B cell (primary cell): ENCODE measurements at regions of chr14 and their contacts with region 1.

Region 1: DNA sequence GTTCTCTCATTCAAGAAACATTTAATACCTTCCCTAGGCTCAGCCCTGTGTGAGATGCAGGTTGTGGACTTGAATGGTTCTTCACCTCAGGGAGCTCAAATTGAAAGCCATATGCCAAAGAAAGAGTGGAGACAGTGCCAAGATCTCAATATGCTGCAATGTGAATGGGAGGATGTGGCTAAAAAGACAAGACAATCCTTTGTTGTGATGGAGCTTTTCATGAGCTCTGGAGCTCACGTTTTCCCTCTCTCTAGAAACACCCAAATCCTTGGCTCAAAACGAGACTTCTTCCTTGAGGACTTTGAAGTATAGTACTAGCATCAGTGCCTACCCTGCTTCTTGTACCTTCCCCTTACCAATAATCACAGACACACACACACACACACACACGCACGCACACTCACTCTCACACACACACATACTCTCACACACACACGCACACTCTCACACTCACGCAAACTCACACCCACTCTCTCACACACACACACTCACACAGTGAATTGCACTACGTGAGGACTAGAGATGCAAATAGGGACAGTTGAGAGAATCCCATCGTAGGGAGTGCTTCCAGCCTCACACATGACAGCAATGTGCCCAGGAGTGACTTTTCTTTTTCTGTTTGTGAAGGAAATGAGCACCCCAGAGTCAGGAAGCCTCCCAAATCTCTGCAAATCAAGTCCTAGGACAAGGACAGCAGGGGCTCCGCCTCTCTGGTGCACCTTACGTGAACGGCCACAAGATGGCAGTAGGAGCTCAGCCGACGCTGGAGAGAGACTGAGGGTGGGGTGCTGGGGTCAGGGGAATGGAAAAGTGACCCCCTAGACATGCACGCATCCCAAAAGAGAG is 231.4 kb downstream of the PCNX1 start:
- DNase-seq: peak; percentile 77
- ATAC-seq: peak; percentile 72
- H3K4me3 ChIP-seq: no peak overlapping the region
- H3K4me3 Mint-ChIP-seq: no peak overlapping the region
- H3K27ac ChIP-seq: no peak overlapping the region
- H3K27ac Mint-ChIP-seq: no peak overlapping the region
- H3K4me1 ChIP-seq: peaks cover 15 to 23% of the 10 kb centered on the region in 2 donors
- H3K4me1 Mint-ChIP-seq: peaks cover 27% of the 10 kb centered on the region
- H3K27me3 ChIP-seq: no peaks in the 10 kb centered on the region
- H3K27me3 Mint-ChIP-seq: no peaks in the 10 kb centered on the region
- CTCF ChIP-seq: peak; percentile 97

Region 2: GRCh38 chr14:71103662-71104484 is 34.8 kb before region 1 on chr14:
- CTCF ChIA-PET with region 1: interaction called, 15 read pairs
- POLR2A ChIA-PET with region 1: no interaction called
- intact Hi-C with region 1: loop called (anchors 2 kb)
- DNase-seq: peak; percentile 70
- ATAC-seq: peak; percentile 49
- H3K4me3 ChIP-seq: no peak overlapping the region
- H3K4me3 Mint-ChIP-seq: no peak overlapping the region
- H3K27ac ChIP-seq: no peak overlapping the region
- H3K27ac Mint-ChIP-seq: no peak overlapping the region
- H3K4me1 ChIP-seq: no peaks in the 10 kb centered on the region
- H3K4me1 Mint-ChIP-seq: peaks cover 2% of the 10 kb centered on the region
- H3K27me3 ChIP-seq: no peaks in the 10 kb centered on the region
- H3K27me3 Mint-ChIP-seq: no peaks in the 10 kb centered on the region
- CTCF ChIP-seq: peak; percentile 91

Region 3: GRCh38 chr14:71117839-71118743 is 20.6 kb before region 1 on chr14:
- CTCF ChIA-PET with region 1: interaction called, 13 read pairs
- POLR2A ChIA-PET with region 1: interaction called, 3 read pairs
- intact Hi-C with region 1: no loop called
- DNase-seq: no peak
- ATAC-seq: peak; percentile 37
- H3K4me3 ChIP-seq: no peak overlapping the region
- H3K4me3 Mint-ChIP-seq: no peak overlapping the region
- H3K27ac ChIP-seq: peak overlapping the region in 1 of 2 donors; percentile 78
- H3K27ac Mint-ChIP-seq: peak overlapping the region; percentile 78
- H3K4me1 ChIP-seq: peaks cover 22 to 24% of the 10 kb centered on the region in 2 donors
- H3K4me1 Mint-ChIP-seq: peaks cover 35% of the 10 kb centered on the region
- H3K27me3 ChIP-seq: no peaks in the 10 kb centered on the region
- H3K27me3 Mint-ChIP-seq: no peaks in the 10 kb centered on the region
- CTCF ChIP-seq: no peak

Region 4: DNA sequence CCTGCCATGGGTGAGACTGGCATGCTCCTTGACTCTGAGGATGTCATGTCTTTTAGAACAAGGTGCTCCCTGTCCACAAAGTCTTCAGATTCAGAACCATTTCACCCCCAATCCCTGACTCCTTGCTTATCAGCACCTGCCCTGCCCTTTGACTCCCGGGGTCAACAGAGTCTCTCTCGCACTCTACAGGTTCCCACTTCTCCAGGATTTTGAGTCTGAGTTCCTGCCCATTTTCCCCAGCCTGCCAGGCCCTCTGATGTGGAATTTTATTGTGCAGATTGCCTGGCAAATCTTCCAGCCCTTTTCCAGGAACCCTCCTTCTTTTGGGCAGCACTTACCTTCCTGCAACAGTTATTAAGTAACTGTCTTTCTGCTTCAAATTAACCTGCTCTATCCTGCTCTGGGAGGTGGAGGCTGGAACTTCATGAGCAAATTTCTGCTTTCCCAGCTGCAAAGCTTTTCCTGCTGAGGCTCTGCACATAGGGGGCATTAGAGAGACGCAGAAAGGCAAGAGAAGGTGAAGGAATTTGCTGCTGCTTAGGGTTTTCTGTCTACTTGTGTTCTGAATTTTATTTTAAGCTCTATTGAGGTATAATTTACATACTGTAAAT is 27.6 kb after region 1 on chr14:
- CTCF ChIA-PET with region 1: interaction called, 13 read pairs
- POLR2A ChIA-PET with region 1: no interaction called
- intact Hi-C with region 1: no loop called
- DNase-seq: peak; percentile 18
- ATAC-seq: no peak
- H3K4me3 ChIP-seq: no peak overlapping the region
- H3K4me3 Mint-ChIP-seq: no peak overlapping the region
- H3K27ac ChIP-seq: no peak overlapping the region
- H3K27ac Mint-ChIP-seq: no peak overlapping the region
- H3K4me1 ChIP-seq: peaks cover 0 to 5% of the 10 kb centered on the region in 2 donors
- H3K4me1 Mint-ChIP-seq: peaks cover 13% of the 10 kb centered on the region
- H3K27me3 ChIP-seq: peaks cover 0 to 10% (median 4%) of the 10 kb centered on the region in 4 experiments
- H3K27me3 Mint-ChIP-seq: peaks cover 45% of the 10 kb centered on the region
- CTCF ChIP-seq: no peak

Region 5: DNA sequence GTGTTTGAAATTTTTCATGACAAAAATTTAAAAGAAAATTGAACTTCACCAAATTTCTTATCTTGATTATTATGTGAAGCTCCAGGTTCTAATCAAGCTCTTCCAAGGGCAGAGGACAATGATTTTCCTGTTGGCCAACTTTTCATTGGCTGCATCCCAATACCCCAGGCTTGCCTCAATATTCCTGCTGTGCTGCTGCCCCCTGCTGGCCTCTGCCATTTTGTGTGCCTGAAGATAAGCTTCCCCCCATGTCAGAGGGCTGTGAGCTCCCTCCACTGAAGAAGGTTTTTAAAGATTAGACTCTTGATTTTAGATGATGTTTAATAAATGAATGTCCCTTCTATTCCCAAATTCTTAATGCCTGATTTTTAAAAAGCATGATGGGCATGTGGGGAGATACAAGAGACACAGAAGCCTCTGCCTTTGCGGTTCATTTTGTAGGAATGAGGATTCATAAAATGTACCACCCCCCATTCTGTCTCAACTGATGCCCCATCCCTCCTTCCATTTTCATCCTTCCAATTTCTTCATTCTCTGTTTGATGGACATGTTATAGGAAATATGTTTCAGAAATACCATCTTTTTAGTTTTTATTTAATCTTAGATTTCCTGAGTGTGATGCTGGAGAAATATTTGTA is 716.8 kb after region 1 on chr14:
- CTCF ChIA-PET with region 1: interaction called, 6 read pairs
- POLR2A ChIA-PET with region 1: no interaction called
- intact Hi-C with region 1: loop called (anchors 2 kb)
- DNase-seq: peak; percentile 25
- ATAC-seq: no peak
- H3K4me3 ChIP-seq: no peak overlapping the region
- H3K4me3 Mint-ChIP-seq: no peak overlapping the region
- H3K27ac ChIP-seq: no peak overlapping the region
- H3K27ac Mint-ChIP-seq: no peak overlapping the region
- H3K4me1 ChIP-seq: peaks cover 0 to 13% of the 10 kb centered on the region in 2 donors
- H3K4me1 Mint-ChIP-seq: peaks cover 11% of the 10 kb centered on the region
- H3K27me3 ChIP-seq: peaks cover 0 to 11% (median 2%) of the 10 kb centered on the region in 4 experiments
- H3K27me3 Mint-ChIP-seq: peaks cover 36% of the 10 kb centered on the region
- CTCF ChIP-seq: peak; percentile 65